ENCODE measurements at regions of chr10 and their contacts with region 1.

Region 1: DNA sequence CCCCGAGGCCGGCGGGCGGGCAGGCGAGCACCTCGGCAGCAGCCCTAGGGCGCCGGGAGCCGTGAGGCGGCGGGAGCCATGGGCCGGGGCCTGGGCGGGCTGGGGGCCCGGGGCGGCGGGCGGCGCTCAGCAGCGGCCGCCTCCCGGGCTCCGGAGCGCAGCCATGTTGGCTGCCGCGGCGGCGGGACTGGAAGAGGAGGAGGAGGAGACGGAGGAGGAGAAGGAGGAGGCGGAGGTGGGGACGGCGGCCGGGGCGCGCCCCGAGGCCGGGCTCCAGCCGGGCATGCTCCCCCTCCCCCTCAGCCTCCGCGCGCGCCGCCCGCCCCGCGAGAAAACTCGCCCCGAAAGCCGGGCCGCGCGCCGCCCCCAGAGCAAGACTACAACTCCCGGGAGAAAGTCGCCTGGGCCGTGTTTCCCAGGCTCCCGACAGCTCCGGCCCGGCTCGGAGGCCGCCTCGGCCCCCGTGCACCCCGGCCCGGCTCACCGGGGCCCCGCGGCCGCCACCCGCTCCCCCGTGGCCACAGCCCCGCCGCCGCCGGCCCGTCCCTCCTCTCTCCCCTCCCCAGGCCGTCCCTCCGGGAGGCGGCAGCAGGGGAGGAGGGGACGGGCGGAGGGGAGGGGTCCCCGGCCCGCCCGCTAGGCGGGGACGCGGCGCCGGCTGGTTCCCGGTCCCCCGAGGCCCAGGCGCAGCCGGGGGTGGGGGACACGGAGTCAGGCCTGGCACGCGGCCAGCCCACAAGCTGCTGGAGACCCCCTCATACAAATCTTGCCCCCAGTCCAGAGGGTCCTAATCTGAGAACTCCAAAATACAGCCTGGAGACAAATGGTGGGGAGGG is at the start of gene DLG5:
- DNase-seq: peak in 8 of 10 donors; percentile 21 to 70 (median 52)
- H3K4me3 ChIP-seq: peak within 1 kb of the TSS; percentile 62 to 91 (median 80)
- H3K27ac ChIP-seq: peak within 1 kb of the TSS in 58 of 59 donors; percentile 1 to 92 (median 78)
- H3K27me3 ChIP-seq: no peaks in the 10 kb centered on the region
- CTCF ChIP-seq: peak in 3 of 56 donors; percentile 4 to 30 (median 10)
- total RNA-seq, gene DLG5: 24.0 to 52.8 (median 34.1) TPM

Region 2: DNA sequence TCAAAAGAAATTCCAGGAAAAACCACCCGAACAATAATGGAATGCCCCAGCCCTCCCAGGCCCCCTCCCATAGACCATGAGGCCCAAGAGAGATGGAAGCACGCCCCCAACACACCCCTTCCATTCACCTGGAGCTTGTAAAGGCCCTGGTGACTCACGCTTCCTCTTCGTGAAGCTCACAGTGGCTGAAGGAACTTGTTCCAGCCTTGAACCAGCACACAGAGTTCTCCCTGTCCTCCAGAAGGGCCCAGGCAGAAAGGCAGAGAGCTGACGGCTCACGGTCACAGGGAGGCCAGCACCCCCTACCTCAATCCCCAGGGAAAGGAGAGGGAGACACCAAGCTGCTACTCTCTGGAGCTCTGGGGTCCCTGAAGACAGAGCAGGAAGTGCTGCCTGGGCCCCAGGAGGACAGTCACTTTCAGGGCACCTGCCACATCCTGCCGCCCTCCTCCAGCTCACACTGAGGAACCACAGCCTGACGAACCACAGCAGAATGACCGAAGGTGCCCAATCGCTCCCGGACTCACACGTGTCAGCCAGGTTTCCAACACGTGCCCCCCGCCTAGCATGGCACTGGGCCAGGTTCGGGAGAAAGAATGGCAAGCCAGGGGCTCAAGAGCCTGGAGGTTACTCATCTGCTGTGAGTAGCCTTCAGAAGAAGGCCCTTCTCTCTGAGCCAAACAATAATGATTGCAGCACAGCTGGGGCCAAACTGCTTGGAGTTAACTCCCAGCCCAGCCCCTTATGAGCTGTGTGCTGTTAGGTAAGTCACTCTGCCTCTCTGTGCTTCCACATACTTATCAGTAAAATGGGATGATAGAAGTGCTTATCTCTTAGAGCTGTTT is 53.0 kb before region 1 on chr10:
- intact Hi-C with region 1: loop called (anchors 2 kb)
- DNase-seq: peak in 2 of 10 donors; percentile 30 to 35
- H3K4me3 ChIP-seq: no peak overlapping the region
- H3K27ac ChIP-seq: peak overlapping the region in 57 of 59 donors; percentile 49 to 94 (median 87)
- H3K27me3 ChIP-seq: no peaks in the 10 kb centered on the region
- CTCF ChIP-seq: no peak

Region 3: GRCh38 chr10:77889277-77889903 is 37.4 kb before region 1 on chr10:
- intact Hi-C with region 1: loop called in 1 of 2 experiments (anchors 5 kb)
- DNase-seq: peak in 9 of 10 donors; percentile 43 to 79 (median 70)
- H3K4me3 ChIP-seq: peak overlapping the region in 1 of 59 donors; percentile 31
- H3K27ac ChIP-seq: peak overlapping the region in 46 of 59 donors; percentile 1 to 88 (median 67)
- H3K27me3 ChIP-seq: no peaks in the 10 kb centered on the region
- CTCF ChIP-seq: peak in 11 of 56 donors; percentile 15 to 46 (median 23)

Region 4: DNA sequence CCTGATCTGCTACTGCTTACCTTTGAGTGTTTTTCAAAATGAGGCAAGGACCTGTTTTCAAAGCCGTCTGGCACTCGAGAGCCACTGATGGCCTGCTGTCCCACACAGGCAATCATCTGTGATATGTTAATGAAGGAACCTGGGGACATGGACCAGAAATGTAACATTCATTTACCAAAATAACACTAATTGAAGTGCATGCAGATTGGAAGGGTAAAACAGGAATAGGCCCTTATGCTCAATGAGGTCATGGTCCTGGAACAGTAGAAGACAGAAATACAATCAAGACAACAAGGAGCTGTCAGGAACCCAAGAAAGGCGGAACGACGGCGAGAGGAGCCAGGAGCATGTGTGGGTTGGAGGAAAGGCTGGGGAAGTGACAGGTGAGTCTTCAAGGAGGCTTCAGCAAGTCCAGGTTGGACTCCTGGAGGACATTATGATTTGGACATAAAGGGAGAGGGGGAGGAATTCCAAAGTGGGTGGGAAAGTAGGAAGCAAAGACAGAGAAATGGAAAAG is 74.2 kb after region 1 on chr10:
- intact Hi-C with region 1: no loop called
- DNase-seq: peak in 1 of 10 donors; percentile 29
- H3K4me3 ChIP-seq: no peak overlapping the region
- H3K27ac ChIP-seq: peak overlapping the region in 10 of 59 donors; percentile 1 to 71 (median 34)
- H3K27me3 ChIP-seq: no peaks in the 10 kb centered on the region
- CTCF ChIP-seq: no peak

Region 5: GRCh38 chr10:78029269-78030226 is 102.8 kb after region 1 on chr10 and contains the start of gene POLR3A:
- intact Hi-C with region 1: no loop called
- DNase-seq: peak; percentile 85 to 93 (median 90)
- H3K4me3 ChIP-seq: peak within 1 kb of the TSS; percentile 61 to 100 (median 94)
- H3K27ac ChIP-seq: peak within 1 kb of the TSS; percentile 74 to 98 (median 91)
- H3K27me3 ChIP-seq: no peaks in the 10 kb centered on the region
- CTCF ChIP-seq: peak; percentile 45 to 91 (median 77)
- total RNA-seq, gene POLR3A: 23.2 to 48.6 (median 36.6) TPM